ENCODE measurements at regions of chr9 and their contacts with region 1.

Region 1: GRCh38 chr9:132768932-132769905 is 99.0 kb downstream of the GTF3C4 start:
- DNase-seq: peak; percentile 79
- ATAC-seq: peak; percentile 72
- H3K4me3 Mint-ChIP-seq: peak overlapping the region; percentile 96
- H3K27ac Mint-ChIP-seq: no peak overlapping the region; the same call in 1 of the 2 replicates
- H3K4me1 Mint-ChIP-seq: peaks cover 7% of the 10 kb centered on the region; the same call in 1 of the 2 replicates
- H3K27me3 Mint-ChIP-seq: peaks cover 28% of the 10 kb centered on the region
- CTCF ChIP-seq: peak; percentile 49

Region 2: GRCh38 chr9:132350861-132351315 is 418.3 kb before region 1 on chr9:
- CTCF ChIA-PET with region 1: no interaction called
- POLR2A ChIA-PET with region 1: no interaction called
- DNase-seq: no peak
- ATAC-seq: no peak
- H3K4me3 Mint-ChIP-seq: no peak overlapping the region
- H3K27ac Mint-ChIP-seq: no peak overlapping the region
- H3K4me1 Mint-ChIP-seq: peaks cover 18% of the 10 kb centered on the region
- H3K27me3 Mint-ChIP-seq: no peaks in the 10 kb centered on the region
- CTCF ChIP-seq: no peak

Region 3: DNA sequence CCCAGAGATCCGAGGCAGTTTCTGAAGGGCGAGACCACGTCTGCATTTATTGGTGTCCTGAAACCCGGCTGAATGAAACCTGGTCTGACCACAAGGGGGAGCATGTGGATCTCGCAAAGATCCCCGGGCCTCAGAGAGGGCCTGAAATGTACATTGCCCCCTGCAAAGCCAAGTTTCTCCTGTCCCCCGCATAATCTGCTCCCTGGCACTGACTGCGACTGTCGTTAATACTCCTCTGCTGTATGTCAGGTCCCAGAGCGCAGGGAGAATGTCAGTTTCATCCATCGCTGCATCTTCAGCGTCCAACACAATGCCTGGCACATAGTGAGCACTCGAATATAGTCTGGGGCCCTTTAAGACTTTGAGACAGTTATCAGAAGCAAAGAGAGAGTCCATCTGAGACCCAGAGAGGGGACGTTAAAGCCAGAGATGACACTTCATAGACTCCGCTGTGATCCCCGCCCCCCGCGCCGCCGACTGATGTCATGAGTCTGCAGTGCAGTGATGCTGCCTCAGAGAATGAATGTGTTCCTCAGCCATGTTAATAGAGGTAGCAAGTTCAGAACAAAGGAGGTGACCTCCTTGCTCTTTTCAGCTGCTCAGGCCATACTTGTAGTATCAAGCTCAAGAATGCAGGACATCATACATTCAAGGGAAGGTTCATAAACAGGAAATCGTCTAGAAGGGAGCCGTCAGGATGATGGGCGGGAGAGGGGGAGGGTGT is 261.3 kb before region 1 on chr9:
- CTCF ChIA-PET with region 1: no interaction called
- POLR2A ChIA-PET with region 1: no interaction called
- DNase-seq: peak; percentile 84
- ATAC-seq: peak; percentile 79
- H3K4me3 Mint-ChIP-seq: no peak overlapping the region
- H3K27ac Mint-ChIP-seq: no peak overlapping the region
- H3K4me1 Mint-ChIP-seq: peaks cover 28% of the 10 kb centered on the region
- H3K27me3 Mint-ChIP-seq: no peaks in the 10 kb centered on the region
- CTCF ChIP-seq: peak; percentile 75

Region 4: GRCh38 chr9:132744881-132745755 is 24.1 kb before region 1 on chr9:
- CTCF ChIA-PET with region 1: interaction called, 14 read pairs
- POLR2A ChIA-PET with region 1: no interaction called
- DNase-seq: peak; percentile 50
- ATAC-seq: peak; percentile 75
- H3K4me3 Mint-ChIP-seq: peak overlapping the region; percentile 65
- H3K27ac Mint-ChIP-seq: no peak overlapping the region
- H3K4me1 Mint-ChIP-seq: peaks cover 41% of the 10 kb centered on the region
- H3K27me3 Mint-ChIP-seq: peaks cover 63% of the 10 kb centered on the region
- CTCF ChIP-seq: no peak

Region 5: DNA sequence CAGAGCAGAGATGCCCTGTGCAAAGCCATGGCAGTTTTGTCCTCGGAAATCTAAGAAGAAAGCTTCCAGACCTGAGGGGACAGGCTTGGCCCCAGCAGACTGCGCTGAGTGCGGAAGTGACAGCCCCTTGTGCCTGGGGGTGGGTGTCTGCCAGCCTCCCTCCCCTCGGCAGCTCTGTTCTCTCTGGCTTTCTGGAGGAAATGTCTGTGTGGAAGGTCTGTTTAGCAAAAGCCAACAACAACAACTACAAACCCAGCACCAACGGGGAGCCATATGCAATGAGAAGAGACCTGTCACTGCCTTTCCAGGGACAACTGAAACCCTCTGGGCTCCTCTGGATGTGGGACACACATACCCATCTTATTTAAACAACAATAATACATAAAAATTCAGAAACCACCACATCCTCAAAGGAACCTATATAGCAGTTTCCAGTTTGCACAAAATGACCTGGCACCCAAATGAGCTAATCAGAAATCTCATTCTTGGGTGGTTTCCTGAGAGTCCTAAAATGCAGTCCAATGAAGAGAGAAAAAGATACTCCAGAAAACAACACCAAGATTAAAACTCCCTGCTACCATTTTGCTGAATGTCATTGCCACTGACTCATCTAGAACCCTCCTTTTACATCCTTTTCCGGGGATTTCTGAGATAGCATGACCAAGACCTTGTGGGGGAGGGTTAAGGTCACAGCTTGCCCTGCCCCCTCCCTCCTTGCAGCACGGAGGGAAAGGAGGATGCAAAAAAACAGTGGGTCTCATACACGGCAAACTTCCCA is 11.2 kb after region 1 on chr9:
- CTCF ChIA-PET with region 1: interaction called, 13 read pairs
- POLR2A ChIA-PET with region 1: no interaction called
- DNase-seq: no peak
- ATAC-seq: no peak
- H3K4me3 Mint-ChIP-seq: no peak overlapping the region
- H3K27ac Mint-ChIP-seq: no peak overlapping the region
- H3K4me1 Mint-ChIP-seq: peaks cover 14% of the 10 kb centered on the region
- H3K27me3 Mint-ChIP-seq: peaks cover 2% of the 10 kb centered on the region
- CTCF ChIP-seq: no peak

Region 6: GRCh38 chr9:132877824-132878694 is 108.8 kb after region 1 on chr9 and contains the start of gene AK8:
- CTCF ChIA-PET with region 1: no interaction called
- POLR2A ChIA-PET with region 1: no interaction called
- DNase-seq: peak; percentile 77
- ATAC-seq: peak; percentile 69
- H3K4me3 Mint-ChIP-seq: peak within 1 kb of the TSS; percentile 74
- H3K27ac Mint-ChIP-seq: no peak within 1 kb of the TSS
- H3K4me1 Mint-ChIP-seq: 0 out of 2 replicates have a peak, but pooled peaks cover 3% of the 10 kb centered on the region
- H3K27me3 Mint-ChIP-seq: peaks cover 42% of the 10 kb centered on the region
- CTCF ChIP-seq: no peak
- total RNA-seq, gene AK8: 0.27 to 0.50 TPM (median 0.48 TPM) in 3 replicates